Activated T-helper 2 cell treated with anti-CD3 and anti-CD28 coated beads, Interferon-gamma antibody, Interleukin-2, Interleukin-4, amounts not matched to agents 10 μg/mL and 5 μg/mL and 100 μg/mL, durations not matched to agents 14 hours and 24 hours and 36 hours (primary cell): ENCODE measurements at regions of chr15 and their contacts with region 1.

Region 1: GRCh38 chr15:75201609-75202250 is at the start of gene C15orf39:
- DNase-seq: peak; percentile 76
- H3K4me3 Mint-ChIP-seq: peak within 1 kb of the TSS; percentile 88
- H3K27ac Mint-ChIP-seq: peak within 1 kb of the TSS; percentile 82
- H3K4me1 Mint-ChIP-seq: peaks cover 51% of the 10 kb centered on the region
- H3K27me3 Mint-ChIP-seq: no peaks in the 10 kb centered on the region
- total RNA-seq, gene C15orf39: 62.4 and 63.5 TPM in 2 replicates

Region 2: GRCh38 chr15:74464216-74464615 is 737.5 kb before region 1 on chr15:
- intact Hi-C with region 1: no loop called
- DNase-seq: no peak
- H3K4me3 Mint-ChIP-seq: peak overlapping the region; percentile 24
- H3K27ac Mint-ChIP-seq: peak overlapping the region; percentile 10
- H3K4me1 Mint-ChIP-seq: peaks cover 37% of the 10 kb centered on the region
- H3K27me3 Mint-ChIP-seq: no peaks in the 10 kb centered on the region

Region 3: GRCh38 chr15:74956648-74957300 is 245.0 kb before region 1 on chr15 and contains the start of gene RPP25:
- intact Hi-C with region 1: loop called (anchors 2 kb)
- DNase-seq: peak; percentile 67
- H3K4me3 Mint-ChIP-seq: peak within 1 kb of the TSS; percentile 64
- H3K27ac Mint-ChIP-seq: no peak within 1 kb of the TSS
- H3K4me1 Mint-ChIP-seq: peaks cover 32% of the 10 kb centered on the region
- H3K27me3 Mint-ChIP-seq: peaks cover 39% of the 10 kb centered on the region
- total RNA-seq, gene RPP25: 13.1 and 14.2 TPM in 2 replicates

Region 4: DNA sequence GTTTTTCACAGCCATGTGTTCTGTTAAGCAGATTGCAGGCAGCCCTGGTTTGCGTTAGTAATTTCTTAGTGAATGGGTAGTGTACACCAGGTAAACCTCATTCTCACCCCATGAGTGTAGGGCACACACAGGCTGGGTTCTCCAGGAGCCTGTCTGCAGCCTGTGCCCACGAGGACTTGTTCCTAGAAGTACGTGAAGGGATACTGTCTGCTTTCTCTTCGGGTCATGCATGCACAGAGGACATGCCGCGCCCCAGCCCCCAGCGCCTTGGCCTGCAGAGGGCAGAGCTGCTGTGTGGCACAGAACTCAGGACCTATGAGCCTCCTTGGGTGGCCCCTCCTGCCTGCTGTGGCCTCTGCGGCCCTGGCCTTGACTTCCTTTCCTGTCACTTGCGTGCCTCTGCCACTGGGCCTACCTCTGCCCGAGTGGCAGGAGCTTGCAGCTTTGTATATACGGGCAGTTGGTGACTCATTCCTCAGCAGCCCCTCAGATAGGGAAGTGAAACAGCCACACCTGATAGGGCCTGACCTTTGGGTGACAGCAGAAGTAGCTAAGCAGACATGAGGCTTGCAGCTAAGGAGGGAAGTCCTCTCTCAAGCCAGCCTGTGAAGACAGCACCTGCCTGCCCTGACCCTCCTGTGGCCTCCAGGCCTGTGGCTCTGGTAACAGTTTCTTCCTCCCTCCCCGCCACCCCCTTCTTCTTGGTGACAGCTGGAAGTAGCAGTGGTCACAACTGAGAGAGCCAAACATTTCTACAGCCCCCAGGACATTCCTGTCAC is 158.8 kb before region 1 on chr15:
- intact Hi-C with region 1: loop called (anchors 1 kb)
- DNase-seq: peak; percentile 81
- H3K4me3 Mint-ChIP-seq: peak overlapping the region; percentile 74
- H3K27ac Mint-ChIP-seq: peak overlapping the region; percentile 73
- H3K4me1 Mint-ChIP-seq: peaks cover 87% of the 10 kb centered on the region
- H3K27me3 Mint-ChIP-seq: no peaks in the 10 kb centered on the region

Region 5: GRCh38 chr15:75130597-75131268 is 71.0 kb before region 1 on chr15:
- intact Hi-C with region 1: loop called (anchors 1 kb)
- DNase-seq: no peak
- H3K4me3 Mint-ChIP-seq: peak overlapping the region; percentile 58
- H3K27ac Mint-ChIP-seq: peak overlapping the region; percentile 69
- H3K4me1 Mint-ChIP-seq: peaks cover 31% of the 10 kb centered on the region
- H3K27me3 Mint-ChIP-seq: no peaks in the 10 kb centered on the region